Natural killer cell (primary cell): ENCODE measurements at regions of chr15 and their contacts with region 1.

Region 1: GRCh38 chr15:28786521-28786920 is 61.9 kb downstream of the GOLGA6L7 start:
- DNase-seq: no peak
- ATAC-seq: no peak
- H3K4me3 ChIP-seq: no peak overlapping the region
- H3K4me3 Mint-ChIP-seq: no peak overlapping the region
- H3K27ac ChIP-seq: no peak overlapping the region
- H3K27ac Mint-ChIP-seq: no peak overlapping the region
- H3K4me1 ChIP-seq: no peaks in the 10 kb centered on the region
- H3K4me1 Mint-ChIP-seq: peaks cover 0 to 6% of the 10 kb centered on the region in 2 donors
- H3K27me3 ChIP-seq: peaks cover 2% of the 10 kb centered on the region
- H3K27me3 Mint-ChIP-seq: peaks cover 14 to 16% of the 10 kb centered on the region in 2 donors
- CTCF ChIP-seq: no peak

Region 2: DNA sequence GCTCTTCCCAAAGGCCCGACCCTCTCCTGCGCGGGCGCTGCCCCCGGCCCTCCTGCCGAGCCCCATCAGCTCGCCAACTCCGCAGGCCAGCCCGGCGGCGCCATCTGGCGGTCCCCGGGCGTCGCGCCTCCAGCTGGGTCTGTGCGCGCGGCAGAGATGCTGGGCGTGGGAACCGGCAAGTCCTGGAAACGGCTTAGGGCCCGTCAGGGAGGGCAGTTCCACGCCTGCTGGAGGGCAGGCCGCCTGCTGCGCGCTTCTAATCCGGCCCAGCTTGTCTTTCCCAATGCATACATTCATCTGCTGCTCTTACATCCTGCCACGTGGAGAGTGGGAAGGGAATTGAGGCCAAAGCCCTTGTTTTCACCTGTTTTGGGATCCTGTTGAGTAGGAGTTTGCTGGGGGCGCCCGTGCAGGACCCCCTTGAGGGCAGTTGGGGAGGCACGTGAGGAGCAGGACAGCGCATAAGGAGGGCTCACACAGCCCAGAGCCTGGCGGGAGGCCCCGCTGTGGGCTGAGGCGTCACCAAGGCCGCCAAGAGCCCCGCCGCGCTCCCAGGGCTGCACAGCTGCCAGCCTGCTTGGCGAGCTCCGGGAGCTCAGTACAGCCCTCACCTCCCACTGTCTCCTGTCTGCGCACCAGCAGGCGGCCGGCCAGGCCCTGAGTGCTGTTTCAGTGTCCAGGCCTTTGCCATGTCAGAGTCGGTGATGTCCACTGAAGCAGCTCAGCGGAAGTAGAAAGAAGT is 317.5 kb after region 1 on chr15:
- intact Hi-C with region 1: loop called (anchors 5 kb)
- DNase-seq: peak; percentile 68 to 73
- ATAC-seq: peak; percentile 67 to 91 (median 88)
- H3K4me3 ChIP-seq: no peak overlapping the region
- H3K4me3 Mint-ChIP-seq: peak overlapping the region; percentile 21
- H3K27ac ChIP-seq: no peak overlapping the region
- H3K27ac Mint-ChIP-seq: peak overlapping the region in 1 of 2 donors; percentile 45
- H3K4me1 ChIP-seq: peaks cover 13% of the 10 kb centered on the region
- H3K4me1 Mint-ChIP-seq: peaks cover 0 to 14% of the 10 kb centered on the region in 2 donors
- H3K27me3 ChIP-seq: no peaks in the 10 kb centered on the region
- H3K27me3 Mint-ChIP-seq: no peaks in the 10 kb centered on the region
- CTCF ChIP-seq: peak; percentile 93

Region 3: DNA sequence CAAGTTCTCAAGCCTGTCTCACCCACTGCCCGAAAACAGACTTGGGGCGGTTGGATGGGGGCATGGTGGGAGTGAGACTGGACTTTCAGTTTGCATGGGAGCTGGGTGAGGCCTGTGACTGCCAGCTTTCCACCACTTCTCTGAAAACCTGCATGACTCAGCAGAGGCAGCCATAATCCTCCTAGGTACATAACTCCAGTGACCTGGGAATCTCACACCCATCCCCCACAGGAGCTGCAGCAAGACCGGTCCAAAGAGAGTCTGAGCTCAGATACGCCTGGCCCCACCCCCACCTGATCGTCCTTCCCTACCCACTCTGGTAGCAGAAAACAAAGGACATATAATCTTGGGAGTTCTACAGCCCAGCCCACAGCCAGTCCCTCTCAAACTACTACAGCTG is 375.9 kb after region 1 on chr15:
- intact Hi-C with region 1: no loop called
- DNase-seq: no peak
- ATAC-seq: no peak
- H3K4me3 ChIP-seq: no peak overlapping the region
- H3K4me3 Mint-ChIP-seq: no peak overlapping the region
- H3K27ac ChIP-seq: no peak overlapping the region
- H3K27ac Mint-ChIP-seq: no peak overlapping the region
- H3K4me1 ChIP-seq: peaks cover 5% of the 10 kb centered on the region
- H3K4me1 Mint-ChIP-seq: peaks cover 10 to 11% of the 10 kb centered on the region in 2 donors
- H3K27me3 ChIP-seq: peaks cover 6% of the 10 kb centered on the region
- H3K27me3 Mint-ChIP-seq: peaks cover 37 to 66% of the 10 kb centered on the region in 2 donors
- CTCF ChIP-seq: no peak

Region 4: DNA sequence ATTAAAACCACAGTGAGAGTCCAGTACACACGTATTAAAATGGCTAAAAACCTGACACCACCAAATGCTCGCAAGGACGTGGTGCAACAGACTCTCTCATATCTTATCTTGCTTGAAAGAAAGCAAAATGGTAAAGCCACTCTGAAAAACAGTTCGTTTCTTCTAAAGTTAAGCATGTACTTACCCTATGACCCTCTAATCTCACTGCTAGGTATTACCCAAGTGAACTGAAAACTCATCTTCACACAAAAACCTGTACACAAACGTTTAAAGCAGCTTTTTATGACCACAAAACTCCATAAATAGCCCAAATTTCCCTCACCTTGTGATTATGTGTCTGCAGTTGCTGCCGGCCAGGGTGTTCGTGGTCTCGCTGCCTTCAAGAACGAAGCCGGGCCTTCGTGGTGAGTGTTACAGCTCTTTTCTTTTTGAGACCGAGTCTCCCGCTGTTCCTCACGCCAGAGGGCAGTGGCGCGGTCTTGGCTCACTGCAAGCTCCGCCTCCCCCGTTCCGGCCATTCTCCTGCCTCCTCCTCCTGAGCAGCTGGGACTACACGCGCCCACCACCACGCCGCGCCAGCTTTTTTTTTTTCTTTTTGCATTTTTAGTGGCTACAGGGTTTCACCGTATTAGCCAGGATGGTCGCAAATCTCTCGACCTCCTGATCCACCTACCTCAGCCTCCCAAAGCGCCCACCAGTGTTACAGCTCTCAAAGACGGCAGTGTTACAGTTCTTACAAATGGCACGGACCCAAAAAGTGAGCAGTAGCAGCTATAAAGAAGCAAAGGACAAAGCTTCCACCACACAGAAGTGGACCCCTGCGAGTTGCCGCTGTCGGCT is 870.3 kb after region 1 on chr15:
- intact Hi-C with region 1: no loop called
- DNase-seq: no peak
- ATAC-seq: no peak
- H3K4me3 ChIP-seq: no peak overlapping the region
- H3K4me3 Mint-ChIP-seq: no peak overlapping the region
- H3K27ac ChIP-seq: no peak overlapping the region
- H3K27ac Mint-ChIP-seq: no peak overlapping the region
- H3K4me1 ChIP-seq: no peaks in the 10 kb centered on the region
- H3K4me1 Mint-ChIP-seq: no peaks in the 10 kb centered on the region
- H3K27me3 ChIP-seq: no peaks in the 10 kb centered on the region
- H3K27me3 Mint-ChIP-seq: peaks cover 0 to 7% of the 10 kb centered on the region in 2 donors
- CTCF ChIP-seq: no peak